ENCODE measurements at regions of chr19 and their contacts with region 1.

Region 1: DNA sequence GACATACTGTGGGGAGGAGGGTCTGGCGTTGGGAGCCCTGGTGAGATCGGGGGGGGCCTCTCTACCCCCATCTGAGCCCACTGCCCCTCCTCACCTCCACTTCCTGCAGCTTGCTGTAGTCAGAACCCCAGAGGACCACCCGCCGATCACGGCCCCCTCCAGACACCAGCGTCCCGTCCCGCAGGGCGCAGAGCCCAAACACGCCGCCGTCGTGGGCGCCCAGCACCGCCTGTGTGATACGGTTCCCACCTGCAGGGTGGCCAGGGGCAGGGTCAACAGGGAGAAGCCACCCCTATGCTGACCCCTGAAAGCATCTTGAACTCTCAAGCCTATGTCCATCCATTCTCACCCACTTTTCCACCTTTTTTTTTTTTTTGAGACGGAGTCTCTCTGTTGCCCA is 17.8 kb downstream of the EML2 start:
- DNase-seq: no peak
- ATAC-seq: no peak
- H3K4me3 ChIP-seq: no peak overlapping the region
- H3K27ac ChIP-seq: no peak overlapping the region
- H3K4me1 ChIP-seq: peaks cover 3 to 12% of the 10 kb centered on the region in 2 experiments; a peak in 3 of 5 replicates
- H3K27me3 ChIP-seq: no peaks in the 10 kb centered on the region
- CTCF ChIP-seq: no peak
- EP300 ChIP-seq: no peak
- POLR2A ChIP-seq: no peak
- RAD21 ChIP-seq: no peak

Region 2: DNA sequence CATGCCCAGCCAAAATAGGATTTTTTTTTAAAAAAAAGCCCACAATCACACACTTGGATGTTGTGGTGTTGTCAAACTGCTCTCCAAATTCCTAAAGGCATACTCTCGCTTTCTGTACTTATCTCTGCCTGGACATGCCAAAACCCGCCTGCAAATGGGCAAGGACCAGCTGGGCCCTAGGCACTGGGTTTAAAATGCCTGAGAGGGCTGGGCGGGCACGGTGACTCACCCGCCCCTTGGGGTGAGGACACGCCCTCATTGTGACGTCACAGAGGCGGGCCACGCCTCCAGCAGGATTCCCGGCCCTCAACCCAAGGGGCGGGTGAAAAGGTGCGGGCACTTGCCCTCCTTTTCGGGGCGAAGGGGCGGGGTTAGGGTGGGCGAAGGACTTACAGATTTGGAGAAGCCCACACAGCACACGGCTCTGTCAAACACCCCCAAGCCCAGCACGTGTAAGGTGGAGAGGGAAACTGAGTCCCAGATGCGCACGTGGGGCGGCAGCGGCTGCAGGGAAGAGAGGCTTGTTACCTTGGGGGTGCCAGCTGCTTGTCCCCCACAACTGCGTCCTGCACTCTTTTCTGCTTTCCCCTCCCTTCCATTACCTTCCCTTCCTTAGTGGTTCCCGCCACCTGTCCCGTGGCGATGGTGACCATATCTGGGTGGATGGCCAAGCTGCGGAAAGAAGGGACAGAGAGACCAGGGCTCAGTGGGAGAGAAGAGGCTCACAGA is 11.2 kb after region 1 on chr19:
- CTCF ChIA-PET with region 1: no interaction called
- POLR2A ChIA-PET with region 1: interaction called, 19 read pairs
- in situ Hi-C with region 1: no loop called
- intact Hi-C with region 1: no loop called
- DNase-seq: peak; percentile 89 to 98 (median 98)
- ATAC-seq: peak; percentile 97
- H3K4me3 ChIP-seq: no peak overlapping the region
- H3K27ac ChIP-seq: 0 out of 3 replicates have a peak overlapping the region, but pooled peaks have one; percentile 36
- H3K4me1 ChIP-seq: peaks cover 7 to 22% of the 10 kb centered on the region in 2 experiments
- H3K27me3 ChIP-seq: no peaks in the 10 kb centered on the region; a peak in 1 of 5 replicates
- CTCF ChIP-seq: peak in 1 of 3 experiments; percentile 3; a peak in 1 of 6 replicates
- EP300 ChIP-seq: no peak
- POLR2A ChIP-seq: no peak
- RAD21 ChIP-seq: no peak

Region 3: GRCh38 chr19:45657520-45658167 is 36.3 kb after region 1 on chr19:
- CTCF ChIA-PET with region 1: no interaction called
- POLR2A ChIA-PET with region 1: no interaction called
- in situ Hi-C with region 1: no loop called
- intact Hi-C with region 1: no loop called
- DNase-seq: peak in 2 of 4 experiments; percentile 19 to 22
- ATAC-seq: peak; percentile 33
- H3K4me3 ChIP-seq: no peak overlapping the region
- H3K27ac ChIP-seq: no peak overlapping the region
- H3K4me1 ChIP-seq: peaks cover 4 to 7% of the 10 kb centered on the region in 2 experiments; a peak in 3 of 5 replicates
- H3K27me3 ChIP-seq: no peaks in the 10 kb centered on the region
- CTCF ChIP-seq: no peak
- EP300 ChIP-seq: no peak
- POLR2A ChIP-seq: no peak
- RAD21 ChIP-seq: no peak